OCI-LY7 (cell line): ENCODE measurements at regions of chr5 and their contacts with region 1.

Region 1: GRCh38 chr5:119168401-119168800 is 97.5 kb downstream of the DMXL1 start:
- DNase-seq: no peak
- H3K4me3 ChIP-seq: no peak overlapping the region
- H3K27ac ChIP-seq: no peak overlapping the region
- H3K4me1 ChIP-seq: no peaks in the 10 kb centered on the region
- CTCF ChIP-seq: no peak

Region 2: GRCh38 chr5:118818604-118819003 is 349.8 kb before region 1 on chr5:
- CTCF ChIA-PET with region 1: no interaction called
- POLR2A ChIA-PET with region 1: no interaction called
- intact Hi-C with region 1: no loop called
- DNase-seq: no peak
- H3K4me3 ChIP-seq: no peak overlapping the region
- H3K27ac ChIP-seq: no peak overlapping the region
- H3K4me1 ChIP-seq: no peaks in the 10 kb centered on the region
- CTCF ChIP-seq: no peak

Region 3: GRCh38 chr5:118987988-118988865 is 180.2 kb before region 1 on chr5 and contains the start of gene DTWD2:
- CTCF ChIA-PET with region 1: no interaction called
- POLR2A ChIA-PET with region 1: no interaction called
- intact Hi-C with region 1: no loop called
- DNase-seq: peak; percentile 96
- H3K4me3 ChIP-seq: peak within 1 kb of the TSS; percentile 75
- H3K27ac ChIP-seq: peak within 1 kb of the TSS; percentile 77
- H3K4me1 ChIP-seq: peaks cover 33% of the 10 kb centered on the region
- CTCF ChIP-seq: peak; percentile 98
- total RNA-seq, gene DTWD2: 4.2 and 8.6 TPM in 2 replicates

Region 4: DNA sequence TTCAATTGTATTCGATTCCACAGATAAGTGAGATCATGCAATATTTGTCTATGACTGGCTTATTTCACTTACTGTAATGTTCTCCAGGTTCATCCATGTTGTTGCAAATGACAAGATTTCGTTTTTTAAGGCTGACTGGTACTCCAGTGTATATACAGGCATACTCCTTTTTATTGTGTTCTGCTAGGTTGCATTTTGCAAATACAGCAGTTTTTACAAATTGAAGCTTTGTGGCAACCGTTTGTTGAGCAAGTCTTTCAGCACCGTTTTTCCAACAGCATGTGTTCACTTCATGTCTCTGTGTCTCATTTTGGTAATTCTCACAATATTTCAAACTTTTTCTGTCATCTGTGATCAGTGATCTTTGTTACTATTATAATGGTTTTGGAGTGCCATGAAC is 14.8 kb before region 1 on chr5:
- CTCF ChIA-PET with region 1: no interaction called
- POLR2A ChIA-PET with region 1: interaction called, 15 read pairs
- intact Hi-C with region 1: no loop called
- DNase-seq: no peak
- H3K4me3 ChIP-seq: no peak overlapping the region
- H3K27ac ChIP-seq: no peak overlapping the region
- H3K4me1 ChIP-seq: no peaks in the 10 kb centered on the region
- CTCF ChIP-seq: no peak

Region 5: GRCh38 chr5:119179857-119180641 is 11.6 kb after region 1 on chr5:
- CTCF ChIA-PET with region 1: interaction called, 3 read pairs
- POLR2A ChIA-PET with region 1: interaction called, 15 read pairs
- intact Hi-C with region 1: no loop called
- DNase-seq: no peak
- H3K4me3 ChIP-seq: no peak overlapping the region
- H3K27ac ChIP-seq: no peak overlapping the region
- H3K4me1 ChIP-seq: no peaks in the 10 kb centered on the region
- CTCF ChIP-seq: no peak